ENCODE measurements at regions of chr10 and their contacts with region 1.

Region 1: GRCh38 chr10:112183329-112184051 is at the start of gene GPAM:
- DNase-seq: peak; percentile 98
- H3K4me3 Mint-ChIP-seq: peak within 1 kb of the TSS; percentile 88
- H3K27ac Mint-ChIP-seq: peak within 1 kb of the TSS; percentile 81
- H3K4me1 Mint-ChIP-seq: peaks cover 24% of the 10 kb centered on the region
- H3K27me3 Mint-ChIP-seq: no peaks in the 10 kb centered on the region
- total RNA-seq, gene GPAM: 3.3 to 4.7 TPM

Region 2: DNA sequence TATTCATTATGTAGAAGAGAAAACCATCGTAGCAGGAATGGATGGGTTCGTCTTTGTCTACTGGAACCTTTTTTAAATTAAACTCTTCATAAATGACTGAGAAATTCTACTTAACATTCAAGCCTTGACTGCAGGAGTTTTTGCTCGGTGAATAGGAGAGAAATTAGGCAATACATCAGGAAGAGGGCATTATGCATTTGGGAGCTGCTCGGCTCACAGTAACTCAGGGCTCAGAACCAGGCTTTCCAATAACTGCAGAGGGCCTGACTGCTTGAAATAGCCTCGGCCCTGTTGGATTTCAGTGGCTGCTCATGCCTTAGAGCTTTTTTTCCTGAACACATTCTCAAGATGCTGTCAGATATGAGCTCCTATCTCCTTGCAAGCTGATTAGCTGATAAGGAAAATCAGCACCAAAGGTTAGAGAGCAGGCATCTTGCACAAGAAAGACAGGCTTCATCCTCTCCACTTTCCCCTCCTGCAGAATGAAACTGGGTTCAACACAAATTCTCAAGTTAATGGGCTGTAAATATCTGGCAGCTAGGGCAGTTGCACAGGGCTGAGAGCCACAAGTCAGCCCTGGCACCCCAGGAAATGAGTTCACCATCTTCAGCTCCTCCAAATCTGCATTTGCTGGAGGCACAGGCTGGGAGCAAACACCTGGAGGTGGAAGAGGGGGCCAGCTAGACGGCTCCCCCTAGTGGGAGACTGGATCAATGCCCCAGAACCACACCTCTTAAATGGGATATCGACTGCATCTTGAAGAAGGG is 124.1 kb after region 1 on chr10:
- CTCF ChIA-PET with region 1: interaction called, 10 read pairs
- POLR2A ChIA-PET with region 1: no interaction called
- intact Hi-C with region 1: loop called (anchors 5 kb)
- DNase-seq: peak; percentile 52
- H3K4me3 Mint-ChIP-seq: no peak overlapping the region
- H3K27ac Mint-ChIP-seq: no peak overlapping the region
- H3K4me1 Mint-ChIP-seq: no peaks in the 10 kb centered on the region
- H3K27me3 Mint-ChIP-seq: peaks cover 13% of the 10 kb centered on the region

Region 3: DNA sequence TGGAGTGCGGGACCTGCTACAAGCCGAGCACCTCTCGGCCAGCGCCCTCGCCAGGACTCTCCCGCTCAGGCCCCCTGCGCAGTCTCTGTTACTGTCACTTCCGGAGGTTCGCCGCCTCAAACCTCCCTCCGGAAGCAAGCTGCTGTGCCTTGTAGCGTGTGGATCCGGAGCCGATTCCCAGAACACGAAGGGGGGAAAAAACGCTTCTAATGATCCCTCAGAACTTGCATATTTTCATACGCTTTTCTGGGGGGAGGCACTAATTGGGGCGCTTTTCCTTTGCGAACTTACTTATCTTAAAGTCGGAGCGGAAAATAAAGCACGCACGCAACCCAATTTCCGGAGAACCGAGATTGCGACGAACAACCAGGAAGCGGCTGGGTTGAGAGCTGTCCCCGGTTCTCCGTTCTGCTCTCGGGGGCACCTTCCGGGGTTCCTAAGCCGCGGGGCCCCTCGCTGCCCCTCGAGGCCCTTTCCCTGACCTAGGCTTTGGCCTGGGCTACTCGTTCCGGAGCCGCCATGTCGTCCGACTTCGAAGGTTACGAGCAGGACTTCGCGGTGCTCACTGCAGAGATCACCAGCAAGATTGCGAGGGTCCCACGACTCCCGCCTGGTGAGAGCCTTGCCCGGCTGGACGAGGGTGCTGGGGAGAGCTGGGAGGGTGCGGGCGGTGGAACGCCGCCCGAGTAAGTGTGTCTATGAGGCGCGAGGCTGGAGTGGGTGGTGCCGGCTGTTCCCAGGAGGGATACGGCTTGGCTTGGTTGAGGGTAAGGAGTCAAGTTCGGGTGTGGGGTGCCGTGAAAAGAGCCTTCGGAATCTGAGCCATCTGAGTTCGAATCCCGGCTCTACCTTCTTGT is 263.6 kb after region 1 on chr10 and contains the starts of genes VTI1A and ZDHHC6:
- CTCF ChIA-PET with region 1: no interaction called
- POLR2A ChIA-PET with region 1: interaction called, 3 read pairs
- intact Hi-C with region 1: loop called (anchors 5 kb)
- DNase-seq: peak; percentile 90
- H3K4me3 Mint-ChIP-seq: peak within 1 kb of the TSS; percentile 96
- H3K27ac Mint-ChIP-seq: peak within 1 kb of the TSS; percentile 91
- H3K4me1 Mint-ChIP-seq: peaks cover 51% of the 10 kb centered on the region
- H3K27me3 Mint-ChIP-seq: no peaks in the 10 kb centered on the region
- total RNA-seq, gene VTI1A: 24.3 to 24.5 TPM
- total RNA-seq, gene ZDHHC6: 40.1 to 40.7 TPM

Region 4: DNA sequence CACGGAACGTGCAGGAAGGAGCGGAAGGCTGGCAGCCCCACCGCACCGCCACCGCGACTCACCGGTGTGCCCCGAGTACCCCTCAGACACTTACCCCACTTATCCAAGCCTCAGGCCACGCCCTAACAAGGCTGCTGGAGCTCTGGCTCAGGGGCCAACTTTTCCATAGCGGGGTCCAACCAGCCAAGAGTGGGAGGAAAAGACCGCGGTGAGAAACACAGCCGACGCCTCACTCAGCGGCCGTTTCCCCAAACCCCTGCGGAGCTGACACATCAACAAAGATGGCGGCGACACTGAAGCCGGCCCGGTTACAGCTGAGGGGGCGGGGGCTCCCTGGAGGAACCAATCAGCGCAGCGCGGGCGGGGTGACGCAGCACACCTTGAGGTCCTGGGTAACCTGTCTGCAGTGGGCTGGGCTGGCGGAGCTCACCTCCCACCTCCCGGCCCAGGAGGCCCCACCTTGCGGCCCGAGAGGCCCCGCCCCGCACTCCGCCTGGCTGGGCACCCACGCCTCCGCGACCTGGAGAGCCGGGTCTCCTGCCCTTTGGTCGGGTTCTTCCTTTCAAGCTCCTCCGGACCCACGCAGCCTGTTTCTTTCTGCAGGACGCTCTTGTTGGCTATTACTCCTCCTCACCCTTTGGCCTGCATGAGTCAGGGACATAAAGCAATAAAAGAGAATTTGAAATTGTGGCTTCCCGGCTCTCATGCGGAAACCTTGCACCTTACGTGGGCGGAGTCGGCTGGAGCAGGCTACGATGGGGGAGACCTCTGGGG is 1990.6 kb after region 1 on chr10 and contains the start of gene CCDC186:
- CTCF ChIA-PET with region 1: no interaction called
- POLR2A ChIA-PET with region 1: no interaction called
- intact Hi-C with region 1: loop called (anchors 10 kb)
- DNase-seq: peak; percentile 99
- H3K4me3 Mint-ChIP-seq: peak within 1 kb of the TSS; percentile 93
- H3K27ac Mint-ChIP-seq: peak within 1 kb of the TSS; percentile 91
- H3K4me1 Mint-ChIP-seq: peaks cover 33% of the 10 kb centered on the region
- H3K27me3 Mint-ChIP-seq: no peaks in the 10 kb centered on the region
- total RNA-seq, gene CCDC186: 12.6 to 13.8 TPM